ENCODE measurements at regions of chr3 and their contacts with region 1.

Region 1: DNA sequence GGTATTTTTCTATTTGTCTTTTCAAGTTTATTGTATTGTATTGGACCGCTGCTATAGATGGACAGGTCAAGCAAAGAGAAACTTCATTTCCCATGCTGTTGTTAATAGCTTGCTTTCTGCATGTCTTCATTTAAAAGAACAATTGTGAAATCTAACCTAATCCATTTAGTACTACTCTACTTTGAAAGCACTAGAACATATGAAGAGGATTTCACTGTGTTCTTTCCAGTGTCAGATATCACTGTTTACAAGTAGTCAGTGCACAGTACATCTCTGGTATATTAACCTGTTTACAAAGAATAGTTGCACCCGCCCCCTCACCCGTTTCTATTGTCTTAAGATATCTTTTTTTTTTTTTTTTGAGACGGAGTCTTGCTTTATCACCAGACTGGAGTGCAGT is 21.8 kb upstream of the EDEM1 start:
- DNase-seq: no peak
- ATAC-seq: no peak
- H3K4me3 ChIP-seq: no peak overlapping the region
- H3K4me3 Mint-ChIP-seq: no peak overlapping the region
- H3K27ac ChIP-seq: no peak overlapping the region
- H3K27ac Mint-ChIP-seq: peak overlapping the region in 5 of 9 donors; percentile 24 to 45 (median 34)
- H3K4me1 ChIP-seq: peaks cover 0 to 18% of the 10 kb centered on the region in 2 donors
- H3K4me1 Mint-ChIP-seq: peaks cover 23 to 85% (median 77%) of the 10 kb centered on the region in 7 donors
- H3K27me3 ChIP-seq: no peaks in the 10 kb centered on the region
- H3K27me3 Mint-ChIP-seq: no peaks in the 10 kb centered on the region

Region 2: DNA sequence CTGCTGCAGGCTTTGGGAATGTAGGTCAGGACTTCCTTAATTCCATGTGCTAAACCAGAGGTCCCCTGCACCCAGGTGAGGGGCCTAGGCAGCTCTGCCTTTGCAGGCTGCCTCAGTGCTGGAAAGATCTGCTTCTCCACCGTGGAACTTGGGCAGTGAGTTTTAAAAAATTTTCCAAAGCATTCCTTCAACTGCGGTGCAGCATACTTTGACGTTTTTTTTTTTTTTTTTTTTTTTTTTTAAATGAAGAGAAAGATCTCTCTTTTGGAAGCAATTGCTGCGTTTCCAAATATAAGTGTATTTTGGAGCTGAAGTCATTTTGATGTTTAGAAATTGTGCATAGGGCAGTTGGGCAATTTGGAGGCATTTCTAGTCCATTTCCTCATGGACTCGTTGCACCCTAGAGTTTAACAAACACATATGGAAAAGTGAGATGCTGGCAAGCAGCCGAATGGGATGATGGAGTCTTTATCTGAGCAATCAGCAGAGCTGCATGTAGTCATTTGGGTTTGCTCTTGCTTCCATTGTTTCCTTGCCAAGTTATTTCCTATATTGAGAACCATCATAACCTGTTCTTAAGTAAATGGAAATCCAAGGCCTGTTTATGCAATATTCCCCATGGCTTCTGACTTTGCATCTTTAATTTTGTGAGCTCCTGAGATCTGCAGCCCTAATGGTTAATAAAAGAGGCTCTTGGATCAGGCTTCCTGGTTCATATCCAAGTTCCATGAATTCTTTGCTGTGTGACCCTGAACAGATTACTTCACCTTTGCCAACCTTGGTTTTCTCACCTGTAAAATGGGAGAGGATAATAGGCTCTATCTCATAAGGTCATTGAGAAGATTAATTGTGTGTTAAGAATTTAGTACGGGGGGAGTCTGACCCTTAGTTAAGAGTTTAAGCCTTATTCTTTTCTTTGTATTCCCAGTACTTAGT is 641.3 kb before region 1 on chr3:
- CTCF ChIA-PET with region 1: no interaction called
- POLR2A ChIA-PET with region 1: no interaction called
- intact Hi-C with region 1: no loop called
- DNase-seq: no peak
- ATAC-seq: no peak
- H3K4me3 ChIP-seq: no peak overlapping the region
- H3K4me3 Mint-ChIP-seq: no peak overlapping the region
- H3K27ac ChIP-seq: no peak overlapping the region
- H3K27ac Mint-ChIP-seq: no peak overlapping the region
- H3K4me1 ChIP-seq: peaks cover 3 to 6% of the 10 kb centered on the region in 2 donors
- H3K4me1 Mint-ChIP-seq: peaks cover 21 to 65% (median 34%) of the 10 kb centered on the region in 7 donors
- H3K27me3 ChIP-seq: no peaks in the 10 kb centered on the region
- H3K27me3 Mint-ChIP-seq: no peaks in the 10 kb centered on the region

Region 3: DNA sequence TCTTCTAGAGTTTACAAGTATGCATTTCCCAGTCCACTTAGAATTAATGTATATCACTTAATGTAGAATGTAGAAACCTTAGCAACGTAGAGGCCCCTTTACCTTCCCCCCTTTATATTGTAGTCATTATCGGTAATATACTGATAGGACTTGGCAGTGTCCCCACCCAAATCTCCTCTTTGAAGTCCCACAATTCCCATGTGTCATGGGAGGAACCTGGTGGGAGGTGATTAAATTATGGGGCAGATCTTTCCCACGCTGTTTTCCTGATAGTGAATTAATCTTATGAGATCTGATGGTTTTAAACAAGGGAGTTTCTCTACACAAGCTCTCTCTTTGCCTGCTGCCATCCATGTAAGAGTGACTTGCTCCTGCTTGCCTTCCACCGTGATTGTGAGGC is 12.6 kb before region 1 on chr3:
- CTCF ChIA-PET with region 1: no interaction called
- POLR2A ChIA-PET with region 1: no interaction called
- intact Hi-C with region 1: loop called in 1 of 2 experiments (anchors 2 kb)
- DNase-seq: no peak
- ATAC-seq: no peak
- H3K4me3 ChIP-seq: no peak overlapping the region
- H3K4me3 Mint-ChIP-seq: peak overlapping the region in 1 of 10 donors; percentile 6
- H3K27ac ChIP-seq: no peak overlapping the region
- H3K27ac Mint-ChIP-seq: peak overlapping the region in 3 of 9 donors; percentile 22 to 62 (median 55)
- H3K4me1 ChIP-seq: peaks cover 0 to 7% of the 10 kb centered on the region in 2 donors
- H3K4me1 Mint-ChIP-seq: peaks cover 24 to 93% (median 87%) of the 10 kb centered on the region in 7 donors
- H3K27me3 ChIP-seq: no peaks in the 10 kb centered on the region
- H3K27me3 Mint-ChIP-seq: no peaks in the 10 kb centered on the region

Measured in naive thymus-derived CD4-positive, alpha-beta T cell (primary cell).